Activated CD4-positive, alpha-beta memory T cell treated with anti-CD3 and anti-CD28 coated beads for 36 hours (primary cell): ENCODE measurements at regions of chr12 and their contacts with region 1.

Region 1: DNA sequence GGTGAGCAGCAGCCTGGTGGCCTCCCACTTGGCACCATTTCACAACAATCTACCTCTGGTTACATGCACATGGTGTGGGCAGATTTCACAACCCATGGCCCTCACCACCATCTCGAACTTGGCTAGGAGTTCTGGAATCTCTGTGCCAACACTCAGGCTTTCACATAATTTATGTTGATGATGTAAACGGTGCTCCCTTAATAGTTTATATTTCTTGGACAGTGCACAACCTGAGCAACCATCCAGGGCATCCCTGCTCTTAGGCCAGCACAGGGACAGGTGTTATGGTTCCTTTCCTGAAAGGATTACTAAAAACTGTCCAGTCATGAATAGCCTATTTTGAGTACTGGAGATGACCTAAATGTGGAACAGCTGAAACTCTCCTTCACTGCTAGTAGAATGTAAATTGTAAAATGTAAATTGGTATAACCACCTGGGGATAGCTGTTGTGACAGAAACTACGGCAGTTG is 28.6 kb downstream of the ABCB9 start:
- DNase-seq: no peak
- H3K4me3 Mint-ChIP-seq: no peak overlapping the region
- H3K27ac Mint-ChIP-seq: no peak overlapping the region
- H3K4me1 Mint-ChIP-seq: no peaks in the 10 kb centered on the region
- H3K27me3 Mint-ChIP-seq: no peaks in the 10 kb centered on the region

Region 2: GRCh38 chr12:122860346-122861090 is 77.1 kb before region 1 on chr12:
- CTCF ChIA-PET with region 1: interaction called, 12 read pairs
- POLR2A ChIA-PET with region 1: no interaction called
- intact Hi-C with region 1: no loop called
- DNase-seq: peak; percentile 88
- H3K4me3 Mint-ChIP-seq: no peak overlapping the region
- H3K27ac Mint-ChIP-seq: no peak overlapping the region
- H3K4me1 Mint-ChIP-seq: no peaks in the 10 kb centered on the region
- H3K27me3 Mint-ChIP-seq: no peaks in the 10 kb centered on the region